G401 (cell line): ENCODE measurements at regions of chr12 and their contacts with region 1.

Region 1: DNA sequence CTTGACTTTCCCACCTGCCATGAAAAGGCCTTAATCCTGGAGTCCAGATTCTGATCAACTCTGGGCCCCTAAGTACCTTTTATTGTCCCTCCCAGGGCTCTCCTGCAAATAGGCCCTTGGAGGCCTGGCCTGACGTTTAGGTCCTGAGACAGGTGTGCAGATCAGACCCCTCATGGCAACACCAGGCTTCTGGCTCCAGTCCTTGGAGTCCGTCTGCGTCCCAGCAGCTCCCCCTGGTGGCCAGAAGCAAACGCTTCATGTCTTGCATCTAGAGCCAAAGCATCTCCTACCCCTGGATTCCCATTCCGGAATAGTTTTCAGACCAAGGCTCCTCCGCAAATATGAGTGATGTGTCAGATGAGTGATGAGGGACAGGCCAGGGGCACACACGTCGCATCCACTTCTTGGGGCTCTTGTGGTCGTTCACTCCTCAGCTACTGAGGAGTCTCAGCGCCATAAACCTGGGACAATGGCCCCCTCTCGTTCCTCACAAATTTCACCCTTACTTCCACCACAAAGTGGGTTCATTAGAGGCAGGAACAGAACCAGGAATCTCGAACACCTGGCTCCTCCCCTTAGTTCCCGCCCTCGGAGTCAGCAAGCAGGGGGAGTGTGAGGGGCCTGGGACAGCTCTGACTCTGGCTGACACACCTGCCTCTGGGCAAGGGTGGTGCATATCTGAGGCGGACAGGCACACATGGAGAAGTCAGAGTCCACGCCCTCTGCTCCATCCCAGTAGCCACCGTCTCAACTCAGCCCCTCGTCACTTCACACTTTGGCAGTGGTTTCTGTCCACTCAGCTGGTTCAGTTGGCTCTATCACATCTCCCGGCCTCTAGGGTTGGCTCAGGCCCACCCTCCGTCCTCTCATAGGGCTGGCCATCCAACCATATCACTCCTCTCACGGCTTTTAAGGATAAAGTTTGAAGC is 77.9 kb upstream of the PWP1 start:
- DNase-seq: peak; percentile 77

Region 2: DNA sequence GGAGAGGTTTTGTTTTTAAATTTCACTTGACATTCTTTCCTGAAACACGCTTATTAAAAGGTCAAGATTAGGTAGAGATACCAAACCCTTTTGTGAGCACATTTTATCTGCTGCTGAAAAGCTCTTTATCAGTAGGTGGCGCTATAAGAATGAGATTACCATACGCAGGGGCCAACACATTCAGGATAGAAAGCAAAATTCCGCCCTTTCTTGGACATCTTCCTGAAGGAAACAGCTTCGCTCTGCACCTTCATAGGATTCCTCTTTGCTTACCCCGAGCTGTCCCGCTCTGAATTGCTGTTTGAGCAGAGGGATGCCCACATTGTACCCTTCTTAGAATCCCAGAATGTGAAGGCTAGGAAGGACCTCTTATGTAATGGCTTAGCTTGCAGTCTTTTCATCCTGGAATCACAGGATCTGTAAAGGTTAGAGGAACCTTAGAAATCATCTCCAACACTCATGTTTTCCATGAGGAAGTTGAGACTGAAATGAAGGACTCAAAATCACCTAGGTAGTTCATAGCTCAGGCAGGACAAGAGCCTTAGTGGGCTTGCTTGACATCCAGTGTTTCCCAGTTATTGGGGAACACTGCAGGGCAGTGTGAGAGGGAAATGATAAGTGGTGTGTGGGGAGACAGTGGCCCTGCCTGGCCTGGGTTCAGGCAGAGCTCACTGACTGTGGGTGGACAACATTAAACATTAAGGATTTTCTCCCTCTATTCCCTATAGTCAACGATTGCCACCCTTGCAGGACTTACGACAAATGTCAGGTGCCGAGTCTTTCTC is 475.7 kb before region 1 on chr12:
- in situ Hi-C with region 1: loop called (anchors 25 kb)
- DNase-seq: peak; percentile 84